Activated CD4-positive, alpha-beta T cell treated with anti-CD3 and anti-CD28 coated beads for 36 hours (primary cell): ENCODE measurements at regions of chr2 and their contacts with region 1.

Region 1: GRCh38 chr2:201780674-201781581 is at the start of gene ALS2:
- DNase-seq: peak; percentile 96
- ATAC-seq: peak; percentile 95
- H3K4me3 Mint-ChIP-seq: peak within 1 kb of the TSS; percentile 84
- H3K27ac Mint-ChIP-seq: peak within 1 kb of the TSS; percentile 92
- H3K4me1 Mint-ChIP-seq: peaks cover 25% of the 10 kb centered on the region
- H3K27me3 Mint-ChIP-seq: peaks cover 7% of the 10 kb centered on the region
- total RNA-seq, gene ALS2: 12.3 to 12.4 TPM

Region 2: GRCh38 chr2:201642579-201643215 is 138.2 kb before region 1 on chr2:
- CTCF ChIA-PET with region 1: interaction called, 3 read pairs
- POLR2A ChIA-PET with region 1: no interaction called
- intact Hi-C with region 1: loop called (anchors 1 to 5 kb)
- DNase-seq: peak; percentile 91
- ATAC-seq: peak; percentile 82
- H3K4me3 Mint-ChIP-seq: peak overlapping the region; percentile 79
- H3K27ac Mint-ChIP-seq: peak overlapping the region; percentile 84
- H3K4me1 Mint-ChIP-seq: peaks cover 9% of the 10 kb centered on the region
- H3K27me3 Mint-ChIP-seq: no peaks in the 10 kb centered on the region

Region 3: DNA sequence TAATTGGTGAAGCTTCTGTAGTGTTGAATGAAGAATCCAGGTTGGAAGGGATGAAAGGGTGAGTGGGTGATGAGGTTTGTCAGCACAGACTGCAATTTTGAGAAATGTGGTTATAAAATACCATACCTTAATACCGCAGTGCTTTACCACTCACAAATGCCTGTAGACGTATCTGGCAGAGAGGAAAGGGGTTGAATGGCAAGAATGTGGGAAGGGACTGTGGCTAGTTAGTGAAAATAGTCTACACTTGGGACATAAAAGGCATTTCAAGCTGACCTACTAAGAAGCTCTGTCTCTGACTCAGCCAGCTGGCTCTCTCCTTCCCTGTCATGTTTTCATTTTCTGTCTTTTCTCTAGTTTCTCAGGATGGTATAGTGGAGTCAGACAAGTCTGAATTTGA is 50.5 kb after region 1 on chr2:
- CTCF ChIA-PET with region 1: no interaction called
- POLR2A ChIA-PET with region 1: no interaction called
- intact Hi-C with region 1: no loop called
- DNase-seq: no peak
- ATAC-seq: no peak
- H3K4me3 Mint-ChIP-seq: no peak overlapping the region
- H3K27ac Mint-ChIP-seq: no peak overlapping the region
- H3K4me1 Mint-ChIP-seq: no peaks in the 10 kb centered on the region
- H3K27me3 Mint-ChIP-seq: peaks cover 3% of the 10 kb centered on the region

Region 4: DNA sequence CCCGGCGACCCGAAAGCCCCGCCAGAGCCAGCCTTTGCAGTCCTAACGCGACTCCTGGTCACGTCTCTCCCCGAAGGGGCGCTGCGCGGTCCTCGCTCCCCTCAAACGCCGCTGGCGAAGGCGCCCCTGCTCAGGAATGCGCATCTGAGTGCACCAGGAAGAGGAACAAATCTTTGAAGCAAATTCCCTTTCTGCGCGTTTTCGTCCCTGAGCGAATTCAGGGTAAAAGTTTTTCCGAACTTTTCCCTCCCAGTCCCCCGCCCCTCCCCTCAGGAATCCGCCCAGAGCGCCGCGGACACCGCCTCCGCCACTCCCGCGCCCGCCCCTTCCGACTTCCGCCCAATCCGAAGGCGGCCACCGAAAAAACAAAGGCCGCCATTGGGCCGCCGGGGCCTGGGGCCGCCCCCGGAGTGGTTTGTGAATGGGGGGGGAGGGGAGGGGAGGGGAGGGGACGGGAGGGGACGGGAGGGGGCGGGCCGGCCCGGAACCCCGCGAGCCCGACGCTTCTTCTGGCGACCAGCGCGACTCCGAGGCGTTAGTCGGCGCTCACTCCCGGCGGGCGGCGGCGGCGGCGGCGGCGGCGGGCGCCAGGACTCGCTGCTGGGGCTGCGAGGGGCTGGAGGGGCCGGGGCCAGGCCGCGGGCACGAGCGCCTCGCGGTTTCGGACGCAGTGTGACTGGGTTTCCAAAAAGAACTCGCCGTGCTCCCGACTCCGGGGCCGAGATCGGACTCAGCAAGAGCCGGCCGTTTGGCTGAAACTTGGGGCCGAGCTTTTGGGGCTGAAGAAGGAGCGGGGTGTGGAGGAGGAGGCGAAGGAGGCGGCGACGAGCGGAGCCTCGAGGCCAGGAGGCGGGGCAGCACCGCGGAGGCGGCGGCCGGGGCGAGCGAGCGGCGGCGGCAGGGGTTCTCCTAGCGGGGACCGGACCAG is 252.7 kb after region 1 on chr2 and contains the start of gene FZD7:
- CTCF ChIA-PET with region 1: no interaction called
- POLR2A ChIA-PET with region 1: no interaction called
- intact Hi-C with region 1: loop called (anchors 1 to 2 kb)
- DNase-seq: peak; percentile 91
- ATAC-seq: peak; percentile 83
- H3K4me3 Mint-ChIP-seq: peak within 1 kb of the TSS; percentile 72
- H3K27ac Mint-ChIP-seq: peak within 1 kb of the TSS; percentile 22
- H3K4me1 Mint-ChIP-seq: peaks cover 13% of the 10 kb centered on the region
- H3K27me3 Mint-ChIP-seq: peaks cover 21% of the 10 kb centered on the region
- total RNA-seq, gene FZD7: 0.58 to 0.94 TPM